Lower lobe of right lung (tissue), 2 donors: ENCODE measurements at regions of chr18 and their contacts with region 1.

Region 1: DNA sequence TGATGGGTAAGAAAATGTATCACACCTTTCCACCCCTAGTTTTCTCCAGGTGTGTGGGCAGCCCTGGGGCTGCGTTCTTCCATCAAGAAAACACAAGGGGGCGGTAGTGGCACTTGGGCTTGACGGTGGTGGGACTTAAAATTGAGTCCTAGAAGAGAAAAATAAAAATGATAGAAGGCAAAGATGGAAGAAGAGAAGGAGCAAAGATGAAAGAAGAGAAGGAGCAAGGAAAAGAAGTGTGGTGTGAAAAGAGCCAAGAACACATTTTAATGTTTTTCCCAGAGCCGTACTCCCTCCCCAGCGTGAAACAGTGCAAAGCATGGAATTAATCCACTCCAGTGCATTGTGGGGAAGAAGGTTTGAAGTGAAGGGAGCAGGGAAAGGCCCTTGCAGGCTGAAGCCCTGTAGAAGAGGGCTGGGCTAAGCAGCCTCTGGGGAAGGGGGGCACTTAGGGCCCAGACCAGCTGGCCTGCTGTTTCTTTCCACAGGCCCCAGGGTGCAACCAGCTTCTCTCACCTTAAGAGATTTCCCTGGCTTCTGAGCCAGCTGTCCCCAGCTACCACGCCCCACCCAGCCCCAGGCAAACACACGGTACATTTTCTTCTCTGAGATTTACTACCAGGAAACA is 256.8 kb downstream of the RNF152 start:
- DNase-seq: peak; percentile 49
- ATAC-seq: peak; percentile 81 to 85
- H3K4me3 ChIP-seq: no peak overlapping the region
- H3K27ac ChIP-seq: peak overlapping the region; percentile 43
- H3K4me1 ChIP-seq: peaks cover 10% of the 10 kb centered on the region
- H3K27me3 ChIP-seq: no peaks in the 10 kb centered on the region
- CTCF ChIP-seq: peak; percentile 80

Region 2: GRCh38 chr18:61248589-61248988 is 387.4 kb before region 1 on chr18:
- intact Hi-C with region 1: no loop called
- DNase-seq: no peak
- ATAC-seq: no peak
- H3K4me3 ChIP-seq: no peak overlapping the region
- H3K27ac ChIP-seq: no peak overlapping the region
- H3K4me1 ChIP-seq: no peaks in the 10 kb centered on the region
- H3K27me3 ChIP-seq: no peaks in the 10 kb centered on the region
- CTCF ChIP-seq: no peak

Region 3: DNA sequence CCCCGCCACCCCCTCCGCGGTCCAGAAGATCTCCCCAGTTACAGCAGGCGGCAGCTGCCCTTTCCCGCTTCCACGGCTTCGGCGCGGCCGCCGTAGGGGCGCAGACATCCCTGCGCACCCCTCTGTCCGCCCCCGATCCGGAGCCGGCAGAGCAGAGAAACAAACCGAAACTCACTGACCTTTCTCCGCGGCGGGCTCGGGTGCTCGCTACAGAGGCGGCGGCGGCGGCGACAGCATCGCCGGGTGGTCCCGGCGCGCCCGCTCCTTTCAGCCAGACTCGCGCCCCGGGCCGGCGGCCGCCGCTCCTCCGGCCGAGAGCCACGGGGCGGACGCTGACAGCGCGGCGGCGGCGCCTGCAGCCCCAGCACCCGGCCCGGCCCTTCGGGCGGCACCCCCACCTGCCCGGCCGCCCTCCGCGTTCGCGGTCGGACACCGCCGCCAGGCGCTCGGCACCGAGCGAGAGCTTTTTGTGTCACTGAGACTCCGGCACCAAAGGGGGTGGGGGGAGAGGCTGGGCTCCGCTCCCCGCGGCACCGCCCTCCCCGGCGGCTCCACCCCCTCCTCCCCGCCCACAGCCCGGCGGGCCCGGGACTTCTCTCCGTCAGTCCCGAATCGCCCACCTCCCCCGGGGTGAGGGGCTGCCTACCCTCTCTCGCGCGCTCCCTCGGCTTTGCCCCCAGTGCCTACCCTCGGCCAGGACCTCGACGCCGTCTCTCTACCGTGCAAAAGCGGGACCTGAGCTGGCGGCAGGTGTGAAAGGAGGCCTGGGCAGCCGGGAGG is 258.1 kb after region 1 on chr18:
- intact Hi-C with region 1: loop called (anchors 10 kb)
- DNase-seq: peak; percentile 80
- ATAC-seq: peak; percentile 92 to 94
- H3K4me3 ChIP-seq: peak overlapping the region; percentile 74
- H3K27ac ChIP-seq: peak overlapping the region; percentile 78
- H3K4me1 ChIP-seq: peaks cover 18% of the 10 kb centered on the region
- H3K27me3 ChIP-seq: peaks cover 11% of the 10 kb centered on the region
- CTCF ChIP-seq: peak; percentile 17